ENCODE measurements at regions of chr6 and their contacts with region 1.

Region 1: DNA sequence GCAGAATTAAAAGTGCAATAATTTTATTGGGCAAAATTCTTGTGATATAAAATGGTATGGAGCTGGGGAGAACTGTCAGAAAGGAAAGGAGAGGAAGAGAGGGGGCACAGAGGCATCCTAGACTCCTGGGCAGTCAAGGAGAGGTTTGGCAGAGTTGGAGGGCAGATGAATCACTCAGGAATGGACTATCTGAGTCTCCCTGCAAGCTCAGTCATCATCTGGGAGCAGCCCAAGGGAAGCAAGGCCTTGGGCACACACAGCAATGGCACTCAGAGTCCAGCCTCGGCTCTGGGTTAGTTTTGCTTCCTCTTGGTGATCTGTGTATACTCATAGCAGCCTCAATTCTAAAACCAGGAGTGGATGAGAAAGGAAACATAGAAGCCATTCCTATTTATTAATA is 67.2 kb downstream of the SLC22A1 start:
- DNase-seq: no peak
- ATAC-seq: no peak
- H3K4me3 Mint-ChIP-seq: no peak overlapping the region
- H3K27ac Mint-ChIP-seq: no peak overlapping the region
- H3K4me1 Mint-ChIP-seq: no peaks in the 10 kb centered on the region
- H3K27me3 Mint-ChIP-seq: peaks cover 10% of the 10 kb centered on the region

Region 2: GRCh38 chr6:159303159-159303558 is 885.6 kb before region 1 on chr6:
- CTCF ChIA-PET with region 1: no interaction called
- POLR2A ChIA-PET with region 1: interaction called, 11 read pairs
- intact Hi-C with region 1: no loop called
- DNase-seq: no peak
- ATAC-seq: no peak
- H3K4me3 Mint-ChIP-seq: no peak overlapping the region
- H3K27ac Mint-ChIP-seq: no peak overlapping the region
- H3K4me1 Mint-ChIP-seq: no peaks in the 10 kb centered on the region
- H3K27me3 Mint-ChIP-seq: peaks cover 18% of the 10 kb centered on the region

Region 3: DNA sequence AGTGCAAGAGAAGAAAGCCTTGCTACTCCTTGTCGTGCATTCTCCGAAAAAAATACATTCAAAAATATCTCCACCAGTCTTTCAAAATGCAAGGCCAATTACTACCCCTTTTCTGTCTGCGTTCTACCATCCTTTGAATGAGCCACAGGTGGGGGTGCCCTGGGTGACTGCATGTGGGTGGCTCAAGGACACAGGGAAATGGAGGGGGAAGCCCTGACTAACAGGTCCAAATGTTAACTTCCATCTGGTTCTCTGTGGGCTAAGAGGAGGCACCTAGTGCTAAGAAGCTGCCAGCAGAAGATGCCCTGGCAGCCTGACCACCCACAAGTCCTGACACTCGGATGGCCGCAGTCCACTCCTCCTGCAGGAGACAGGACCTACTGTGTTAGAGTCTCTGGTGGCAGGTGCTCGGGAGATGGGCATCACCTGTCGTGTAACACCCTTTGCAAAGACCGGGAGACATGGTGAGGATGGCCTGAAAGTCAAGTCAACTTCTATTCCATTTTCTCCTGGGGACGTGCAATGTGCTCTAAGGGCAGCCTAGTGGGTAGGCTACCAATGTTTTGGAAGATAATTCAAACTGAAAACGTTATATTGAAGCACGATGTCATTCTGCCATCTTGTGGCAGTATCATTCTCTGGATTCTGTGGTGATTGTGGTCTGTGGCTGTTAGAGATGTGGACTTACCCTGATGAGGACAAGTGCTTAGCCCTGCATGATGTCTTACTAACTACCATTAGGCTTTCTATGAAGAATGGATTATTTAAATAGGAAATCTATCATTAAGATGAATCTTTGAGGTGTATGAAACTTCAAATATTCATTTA is 247.3 kb before region 1 on chr6:
- CTCF ChIA-PET with region 1: no interaction called
- POLR2A ChIA-PET with region 1: no interaction called
- intact Hi-C with region 1: no loop called
- DNase-seq: peak; percentile 50
- ATAC-seq: peak; percentile 97
- H3K4me3 Mint-ChIP-seq: no peak overlapping the region
- H3K27ac Mint-ChIP-seq: no peak overlapping the region
- H3K4me1 Mint-ChIP-seq: peaks cover 2% of the 10 kb centered on the region
- H3K27me3 Mint-ChIP-seq: no peaks in the 10 kb centered on the region

Region 4: GRCh38 chr6:160445130-160445529 is 256.4 kb after region 1 on chr6:
- CTCF ChIA-PET with region 1: no interaction called
- POLR2A ChIA-PET with region 1: no interaction called
- intact Hi-C with region 1: no loop called
- DNase-seq: no peak
- ATAC-seq: no peak
- H3K4me3 Mint-ChIP-seq: no peak overlapping the region
- H3K27ac Mint-ChIP-seq: no peak overlapping the region
- H3K4me1 Mint-ChIP-seq: peaks cover 2% of the 10 kb centered on the region
- H3K27me3 Mint-ChIP-seq: peaks cover 17% of the 10 kb centered on the region